ENCODE measurements at regions of chr2 and their contacts with region 1.

Region 1: GRCh38 chr2:11784747-11785610 is 38.5 kb downstream of the LPIN1 start:
- DNase-seq: peak; percentile 60
- ATAC-seq: peak; percentile 70
- H3K4me3 Mint-ChIP-seq: no peak overlapping the region
- H3K27ac Mint-ChIP-seq: no peak overlapping the region
- H3K4me1 Mint-ChIP-seq: no peaks in the 10 kb centered on the region
- H3K27me3 Mint-ChIP-seq: no peaks in the 10 kb centered on the region
- CTCF ChIP-seq: peak; percentile 98

Region 2: GRCh38 chr2:11767779-11768178 is 17.2 kb before region 1 on chr2:
- CTCF ChIA-PET with region 1: interaction called, 16 read pairs
- POLR2A ChIA-PET with region 1: no interaction called
- intact Hi-C with region 1: no loop called
- DNase-seq: no peak
- ATAC-seq: no peak
- H3K4me3 Mint-ChIP-seq: no peak overlapping the region
- H3K27ac Mint-ChIP-seq: no peak overlapping the region
- H3K4me1 Mint-ChIP-seq: peaks cover 8% of the 10 kb centered on the region
- H3K27me3 Mint-ChIP-seq: no peaks in the 10 kb centered on the region
- CTCF ChIP-seq: no peak

Region 3: DNA sequence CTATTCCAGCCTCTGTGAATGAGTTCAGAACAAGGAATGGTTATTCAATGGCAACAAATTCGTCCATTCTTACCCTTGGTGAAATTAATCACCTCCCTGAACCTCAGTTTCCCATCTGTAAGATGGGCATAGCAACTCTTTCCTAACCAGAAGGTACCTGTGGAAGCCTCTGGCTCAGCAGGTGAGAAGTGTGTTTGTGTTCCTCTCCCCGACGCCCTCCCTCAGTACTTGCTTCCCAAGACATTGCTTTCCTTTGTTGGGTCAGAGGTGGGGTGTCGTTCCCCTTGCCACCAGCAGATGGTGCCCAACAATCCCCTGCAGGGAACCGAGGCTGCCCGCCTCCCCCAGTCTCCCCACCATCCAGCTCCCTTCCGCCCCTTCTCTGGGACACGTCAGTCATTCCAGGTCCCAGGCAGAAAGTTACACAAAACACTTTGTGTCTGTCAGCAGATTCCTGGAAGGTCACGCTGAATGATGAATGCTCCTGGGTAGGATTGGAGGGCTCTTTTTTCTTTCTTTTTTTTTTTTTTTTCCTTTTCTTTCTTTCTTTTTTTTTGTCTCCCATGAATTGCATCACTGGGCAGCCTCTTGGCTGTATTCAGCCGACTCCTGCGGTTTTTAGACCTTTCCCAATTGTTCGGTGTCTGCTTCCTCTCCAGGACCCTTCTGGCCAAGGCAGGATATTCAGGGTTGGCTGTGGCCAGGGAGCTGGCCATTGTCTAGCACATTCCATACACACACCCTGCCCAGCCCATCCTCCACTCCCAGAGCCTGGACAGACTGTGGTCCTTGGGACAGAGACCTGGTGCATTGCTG is 78.7 kb after region 1 on chr2:
- CTCF ChIA-PET with region 1: no interaction called
- POLR2A ChIA-PET with region 1: no interaction called
- intact Hi-C with region 1: no loop called
- DNase-seq: peak; percentile 69
- ATAC-seq: peak; percentile 83
- H3K4me3 Mint-ChIP-seq: no peak overlapping the region
- H3K27ac Mint-ChIP-seq: no peak overlapping the region
- H3K4me1 Mint-ChIP-seq: peaks cover 10% of the 10 kb centered on the region
- H3K27me3 Mint-ChIP-seq: peaks cover 5% of the 10 kb centered on the region
- CTCF ChIP-seq: peak; percentile 96

Measured in activated CD8-positive, alpha-beta T cell treated with anti-CD3 and anti-CD28 coated beads for 36 hours (primary cell).